Activated CD8-positive, alpha-beta memory T cell treated with anti-CD3 and anti-CD28 coated beads, Interleukin-2, amount 10 ng/mL, durations not matched to agents 7 days and 5 days (primary cell): ENCODE measurements at regions of chr17 and their contacts with region 1.

Region 1: DNA sequence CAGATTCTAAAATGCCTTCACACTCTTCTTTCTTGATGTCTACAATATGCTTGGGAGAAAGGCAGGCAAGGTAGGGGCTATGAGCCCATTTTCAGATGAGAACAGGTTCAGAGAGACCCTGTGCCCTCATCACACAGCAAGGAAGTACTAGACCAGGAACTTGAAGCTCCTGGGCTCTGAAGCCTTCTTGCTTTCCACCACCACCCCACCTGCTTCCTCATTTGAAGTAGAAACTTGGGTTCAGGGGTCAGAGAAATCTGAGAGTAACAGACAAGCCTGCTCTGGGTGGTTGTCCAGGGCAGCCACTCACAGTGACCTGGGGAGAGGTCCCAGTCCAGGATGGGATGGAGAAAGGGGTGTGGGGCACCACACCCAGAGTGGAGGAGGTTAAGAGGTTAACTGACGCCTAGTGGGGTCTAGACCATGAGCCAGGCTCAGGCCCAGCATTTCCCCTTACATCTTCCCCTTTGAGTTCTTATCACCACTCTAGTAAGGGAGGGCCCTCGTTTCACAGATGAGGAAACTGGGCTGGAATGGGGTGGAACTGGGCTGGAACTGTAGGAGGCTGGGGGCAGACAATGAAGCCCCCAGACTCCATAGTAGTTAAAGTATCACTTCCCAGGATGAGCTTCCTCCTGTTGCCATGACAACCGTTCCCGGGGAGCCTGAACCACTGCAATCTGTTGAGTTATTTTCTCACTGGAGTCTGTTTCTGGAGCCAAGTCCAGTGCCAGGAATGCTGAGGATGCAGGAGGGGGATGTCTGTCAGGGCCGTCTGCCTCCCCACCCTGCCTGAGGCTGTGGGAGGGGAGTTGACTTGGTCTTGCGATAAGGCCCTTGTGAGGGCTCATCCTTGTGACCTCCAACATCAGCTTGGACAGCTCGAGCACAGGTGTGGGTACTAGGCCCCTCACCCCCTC is 16.2 kb upstream of the PHF12 start:
- DNase-seq: no peak
- ATAC-seq: no peak
- H3K4me3 Mint-ChIP-seq: no peak overlapping the region
- H3K27ac Mint-ChIP-seq: no peak overlapping the region
- H3K4me1 Mint-ChIP-seq: no peaks in the 10 kb centered on the region
- H3K27me3 Mint-ChIP-seq: peaks cover 16% of the 10 kb centered on the region

Region 2: DNA sequence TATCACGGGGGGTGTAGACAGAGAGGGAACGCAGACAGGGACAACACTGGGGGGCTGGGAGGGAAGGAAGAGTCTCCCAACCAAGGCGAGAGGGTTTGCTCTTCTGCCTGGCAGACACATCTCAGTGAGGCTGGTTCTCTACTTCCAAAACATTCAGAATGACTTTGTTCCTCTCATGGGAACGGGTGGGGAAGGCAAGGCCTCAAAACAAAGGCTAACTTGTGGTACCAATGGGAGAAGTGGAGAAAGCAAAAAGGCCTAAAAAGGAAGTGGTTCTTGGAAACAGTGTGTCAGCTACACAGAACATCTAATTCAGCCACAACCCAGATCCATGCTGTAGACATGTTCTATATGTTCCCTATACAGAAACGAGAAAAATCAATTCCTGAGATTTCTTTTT is 77.5 kb before region 1 on chr17:
- CTCF ChIA-PET with region 1: no interaction called
- DNase-seq: no peak
- ATAC-seq: no peak
- H3K4me3 Mint-ChIP-seq: no peak overlapping the region
- H3K27ac Mint-ChIP-seq: peak overlapping the region; percentile 27
- H3K4me1 Mint-ChIP-seq: peaks cover 42% of the 10 kb centered on the region
- H3K27me3 Mint-ChIP-seq: no peaks in the 10 kb centered on the region

Region 3: GRCh38 chr17:28982131-28982951 is 14.9 kb after region 1 on chr17:
- CTCF ChIA-PET with region 1: interaction called, 22 read pairs
- DNase-seq: peak; percentile 84
- ATAC-seq: peak; percentile 93
- H3K4me3 Mint-ChIP-seq: no peak overlapping the region
- H3K27ac Mint-ChIP-seq: peak overlapping the region; percentile 89
- H3K4me1 Mint-ChIP-seq: peaks cover 21% of the 10 kb centered on the region
- H3K27me3 Mint-ChIP-seq: no peaks in the 10 kb centered on the region

Region 4: GRCh38 chr17:29024316-29024952 is 57.0 kb after region 1 on chr17:
- CTCF ChIA-PET with region 1: no interaction called
- DNase-seq: no peak
- ATAC-seq: no peak
- H3K4me3 Mint-ChIP-seq: no peak overlapping the region
- H3K27ac Mint-ChIP-seq: no peak overlapping the region
- H3K4me1 Mint-ChIP-seq: peaks cover 3% of the 10 kb centered on the region
- H3K27me3 Mint-ChIP-seq: peaks cover 62% of the 10 kb centered on the region

Region 5: GRCh38 chr17:29048440-29049368 is 81.2 kb after region 1 on chr17:
- CTCF ChIA-PET with region 1: interaction called, 10 read pairs
- DNase-seq: no peak
- ATAC-seq: no peak
- H3K4me3 Mint-ChIP-seq: no peak overlapping the region
- H3K27ac Mint-ChIP-seq: no peak overlapping the region
- H3K4me1 Mint-ChIP-seq: peaks cover 4% of the 10 kb centered on the region
- H3K27me3 Mint-ChIP-seq: peaks cover 21% of the 10 kb centered on the region

Region 6: DNA sequence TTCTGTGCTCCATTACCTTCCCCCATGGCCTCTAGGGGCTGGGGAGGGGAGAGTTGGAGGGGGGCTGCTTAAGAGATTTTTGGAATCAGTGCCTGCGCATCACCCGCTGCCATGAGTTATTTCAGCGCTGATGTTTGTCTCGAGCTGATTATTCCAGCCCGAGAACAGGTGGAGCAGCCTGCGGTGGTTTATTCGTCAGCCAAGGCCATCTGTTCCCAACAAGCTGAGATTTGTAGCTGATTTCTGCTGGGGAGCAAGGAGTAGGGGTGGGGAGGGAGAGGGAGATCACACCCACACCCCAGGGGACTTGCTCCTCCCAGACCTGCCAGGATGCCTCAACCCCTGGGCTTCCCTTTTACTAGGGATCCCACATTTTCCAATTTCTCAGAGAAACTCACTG is 98.6 kb after region 1 on chr17:
- CTCF ChIA-PET with region 1: interaction called, 10 read pairs
- DNase-seq: no peak
- ATAC-seq: no peak
- H3K4me3 Mint-ChIP-seq: no peak overlapping the region
- H3K27ac Mint-ChIP-seq: no peak overlapping the region
- H3K4me1 Mint-ChIP-seq: no peaks in the 10 kb centered on the region
- H3K27me3 Mint-ChIP-seq: no peaks in the 10 kb centered on the region

Region 7: GRCh38 chr17:29111816-29112499 is 144.5 kb after region 1 on chr17:
- CTCF ChIA-PET with region 1: interaction called, 337 read pairs
- DNase-seq: peak; percentile 78
- ATAC-seq: peak; percentile 74
- H3K4me3 Mint-ChIP-seq: no peak overlapping the region
- H3K27ac Mint-ChIP-seq: no peak overlapping the region
- H3K4me1 Mint-ChIP-seq: peaks cover 9% of the 10 kb centered on the region
- H3K27me3 Mint-ChIP-seq: no peaks in the 10 kb centered on the region